Head of caudate nucleus (tissue), 42 donors: ENCODE measurements at regions of chr11 and their contacts with region 1.

Region 1: GRCh38 chr11:95231127-95231880 is at the start of gene SESN3:
- DNase-seq: peak; percentile 93 to 99 (median 98)

Region 2: GRCh38 chr11:95150946-95151684 is 80.2 kb before region 1 on chr11:
- intact Hi-C with region 1: loop called (anchors 2 kb)
- DNase-seq: peak; percentile 86 to 98 (median 94)

Region 3: GRCh38 chr11:95699631-95700470 is 468.5 kb after region 1 on chr11:
- intact Hi-C with region 1: loop called (anchors 5 kb)
- DNase-seq: peak in 2 of 42 donors; percentile 32 to 49